ENCODE measurements at regions of chr16 and their contacts with region 1.

Region 1: DNA sequence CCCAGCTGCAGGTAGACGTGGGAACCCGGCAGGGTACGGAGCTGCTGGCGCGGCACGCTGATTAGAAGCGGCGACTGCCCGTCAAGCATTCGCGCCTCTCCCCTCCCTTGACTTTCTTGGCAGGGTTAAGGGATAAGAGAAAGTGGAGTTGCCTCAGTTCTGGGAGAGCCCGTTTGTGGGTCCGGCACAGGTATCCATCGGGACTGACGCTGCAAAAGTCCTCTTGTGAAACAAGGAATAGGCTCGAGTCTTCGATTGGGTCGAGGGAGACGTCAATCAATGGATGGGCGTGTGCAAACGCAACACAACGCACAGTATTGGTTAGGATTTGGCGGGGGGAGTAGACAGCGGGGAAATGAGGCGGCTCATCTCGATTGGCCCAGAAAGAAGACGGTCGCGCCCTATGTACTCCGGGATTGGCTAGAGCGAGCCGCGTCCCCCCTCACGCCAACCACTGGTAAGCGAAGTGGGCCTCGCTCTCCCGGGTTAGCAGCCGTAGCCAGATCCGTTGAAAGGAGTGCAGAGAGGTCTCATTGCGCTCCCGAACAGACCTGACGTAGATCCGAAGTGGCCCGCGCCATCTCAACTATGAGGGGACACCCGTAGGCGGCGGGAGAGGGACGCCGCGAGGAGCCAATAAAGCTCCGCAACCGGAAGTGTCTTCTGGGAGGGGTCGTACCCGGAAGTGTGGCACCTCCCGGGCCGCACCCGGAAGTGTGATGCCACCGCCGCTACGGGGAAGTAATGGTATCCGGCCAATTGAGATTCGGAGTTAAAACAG is at the start of gene MON1B:
- DNase-seq: peak; percentile 93
- H3K4me3 Mint-ChIP-seq: peak within 1 kb of the TSS; percentile 97
- H3K27ac Mint-ChIP-seq: peak within 1 kb of the TSS; percentile 100
- H3K4me1 Mint-ChIP-seq: peaks cover 39% of the 10 kb centered on the region
- H3K27me3 Mint-ChIP-seq: peaks cover 4% of the 10 kb centered on the region
- total RNA-seq, gene MON1B: 66.2 and 70.1 TPM in 2 replicates

Region 2: GRCh38 chr16:77211880-77212740 is 21.4 kb after region 1 on chr16:
- intact Hi-C with region 1: loop called (anchors 1 kb)
- DNase-seq: peak; percentile 68
- H3K4me3 Mint-ChIP-seq: peak overlapping the region; percentile 81
- H3K27ac Mint-ChIP-seq: peak overlapping the region; percentile 90
- H3K4me1 Mint-ChIP-seq: peaks cover 8% of the 10 kb centered on the region
- H3K27me3 Mint-ChIP-seq: peaks cover 2% of the 10 kb centered on the region

Region 3: DNA sequence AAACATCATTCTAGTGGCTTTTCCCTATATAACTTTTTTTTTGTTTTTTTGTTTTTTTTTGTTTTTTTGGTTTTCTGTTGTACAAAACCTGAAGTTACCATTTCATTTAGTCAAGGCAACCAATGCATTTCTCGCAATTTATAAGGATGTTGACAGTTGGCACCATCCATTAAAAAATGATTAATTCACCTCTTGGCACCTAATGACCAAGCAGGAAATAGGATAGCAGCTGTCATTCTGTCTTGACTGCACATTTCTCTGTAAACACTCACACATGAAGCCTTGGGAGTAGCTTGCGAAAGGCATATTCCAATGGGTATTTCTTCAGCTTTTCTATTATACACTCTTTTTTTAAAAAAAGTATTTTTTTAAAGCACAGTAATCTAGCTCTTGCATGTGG is 86.0 kb after region 1 on chr16:
- intact Hi-C with region 1: no loop called
- DNase-seq: no peak
- H3K4me3 Mint-ChIP-seq: no peak overlapping the region
- H3K27ac Mint-ChIP-seq: no peak overlapping the region
- H3K4me1 Mint-ChIP-seq: no peaks in the 10 kb centered on the region
- H3K27me3 Mint-ChIP-seq: peaks cover 6% of the 10 kb centered on the region

Region 4: DNA sequence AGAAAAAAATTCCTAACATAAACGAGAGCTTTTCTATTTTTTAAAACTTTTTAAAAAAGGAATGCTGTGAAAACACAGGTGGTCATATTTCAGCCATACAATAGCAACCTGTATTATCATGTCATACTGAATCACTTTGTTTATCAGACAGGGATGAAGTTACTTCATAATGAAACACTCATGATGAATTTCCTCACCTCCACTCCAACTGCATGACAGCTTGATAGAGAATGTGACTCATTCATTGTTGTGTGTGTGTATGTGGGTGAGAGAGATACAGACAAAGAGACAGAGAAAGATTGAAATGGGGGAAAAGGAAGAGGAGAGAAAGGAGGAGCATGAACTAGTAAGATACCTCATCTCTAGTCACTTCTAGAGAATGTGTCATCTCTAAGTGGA is 117.5 kb after region 1 on chr16:
- intact Hi-C with region 1: loop called (anchors 1 kb)
- DNase-seq: no peak
- H3K4me3 Mint-ChIP-seq: no peak overlapping the region
- H3K27ac Mint-ChIP-seq: peak overlapping the region; percentile 45
- H3K4me1 Mint-ChIP-seq: peaks cover 9% of the 10 kb centered on the region
- H3K27me3 Mint-ChIP-seq: no peaks in the 10 kb centered on the region

Region 5: DNA sequence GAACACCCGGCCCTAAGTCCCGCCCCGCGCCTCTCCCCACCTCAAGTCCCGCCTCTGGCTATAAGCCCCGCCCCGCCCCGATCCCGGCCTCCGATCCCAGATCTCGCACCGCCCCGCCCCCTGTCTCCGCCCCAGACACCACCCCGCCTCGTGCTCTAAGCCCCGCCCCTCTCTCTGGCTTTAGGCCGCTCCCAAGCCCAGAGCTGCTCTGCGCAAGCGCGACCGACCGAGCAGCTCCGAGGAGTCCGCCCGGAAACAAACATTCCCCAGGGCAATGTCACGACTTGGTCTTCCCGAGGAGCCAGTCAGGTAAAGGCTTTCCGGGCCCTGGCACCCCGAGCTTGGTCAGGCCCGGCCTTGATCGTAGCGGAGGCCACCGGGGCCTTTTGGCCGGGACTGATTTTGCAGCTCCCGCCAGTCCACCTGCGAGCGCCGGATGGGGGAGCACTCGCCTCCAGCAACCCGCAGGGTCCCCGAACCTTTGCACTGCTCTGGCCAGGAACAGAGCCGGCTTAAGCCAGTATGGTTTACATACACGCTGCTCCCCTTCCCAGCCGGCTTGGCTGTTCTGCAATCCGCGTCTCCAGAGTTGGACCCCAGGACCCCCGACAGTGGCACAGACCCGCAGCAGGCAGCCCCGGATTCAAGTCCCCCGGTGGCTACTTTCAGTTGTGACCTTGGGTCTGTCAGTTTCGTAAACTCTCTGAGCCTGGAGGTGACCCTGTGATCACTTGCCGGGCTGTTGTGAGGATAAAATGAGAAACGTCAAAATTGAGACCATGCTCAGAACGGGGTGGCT is 531.8 kb after region 1 on chr16 and contains the start of gene NUDT7:
- intact Hi-C with region 1: loop called (anchors 1 kb)
- DNase-seq: peak; percentile 91
- H3K4me3 Mint-ChIP-seq: peak within 1 kb of the TSS; percentile 84
- H3K27ac Mint-ChIP-seq: peak within 1 kb of the TSS; percentile 77
- H3K4me1 Mint-ChIP-seq: peaks cover 13% of the 10 kb centered on the region
- H3K27me3 Mint-ChIP-seq: no peaks in the 10 kb centered on the region
- total RNA-seq, gene NUDT7: 4.3 and 5.6 TPM in 2 replicates